ENCODE measurements at regions of chr13 and their contacts with region 1.

Region 1: GRCh38 chr13:25286969-25287961 is at the start of gene MTMR6:
- DNase-seq: peak; percentile 92 to 96
- H3K4me3 ChIP-seq: peak within 1 kb of the TSS; percentile 76
- H3K4me3 Mint-ChIP-seq: peak within 1 kb of the TSS; percentile 97
- H3K27ac Mint-ChIP-seq: peak within 1 kb of the TSS; percentile 93
- H3K4me1 ChIP-seq: no peaks in the 10 kb centered on the region
- H3K4me1 Mint-ChIP-seq: no peaks in the 10 kb centered on the region
- H3K27me3 ChIP-seq: no peaks in the 10 kb centered on the region
- H3K27me3 Mint-ChIP-seq: peaks cover 23% of the 10 kb centered on the region
- CTCF ChIP-seq: peak; percentile 99
- total RNA-seq, gene MTMR6: 12.7 and 13.0 TPM in 2 replicates

Region 2: DNA sequence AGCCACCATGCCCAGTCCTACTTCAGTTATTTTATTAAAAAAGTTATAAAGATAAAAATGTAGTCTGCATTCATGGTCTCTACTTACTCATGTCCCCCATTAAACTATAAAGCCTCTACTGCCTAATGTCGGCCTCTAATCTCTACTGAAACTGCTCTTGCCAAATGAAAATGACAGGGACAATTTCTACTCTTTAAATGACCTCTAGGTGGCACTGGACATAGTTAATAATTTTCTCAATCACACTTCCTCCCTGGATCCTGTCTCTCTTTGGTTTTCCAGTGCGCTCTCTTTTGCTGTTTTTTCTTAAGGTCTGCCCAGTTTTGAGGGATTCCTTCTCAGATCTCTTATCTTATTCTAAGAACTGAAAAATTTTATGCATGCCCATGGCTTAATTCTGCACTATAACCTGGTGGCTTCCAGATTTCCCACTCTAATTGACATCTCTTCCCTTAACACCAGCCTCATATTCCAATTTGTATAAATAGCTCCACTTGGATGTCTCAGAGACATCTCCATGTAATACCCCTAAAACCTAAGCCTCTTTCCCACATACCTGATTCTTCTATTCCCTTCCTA is 54.2 kb before region 1 on chr13:
- CTCF ChIA-PET with region 1: no interaction called
- POLR2A ChIA-PET with region 1: no interaction called
- intact Hi-C with region 1: loop called (anchors 2 kb)
- DNase-seq: peak in 1 of 2 experiments; percentile 46
- H3K4me3 ChIP-seq: no peak overlapping the region
- H3K4me3 Mint-ChIP-seq: no peak overlapping the region
- H3K27ac Mint-ChIP-seq: peak overlapping the region; percentile 24
- H3K4me1 ChIP-seq: peaks cover 6% of the 10 kb centered on the region; the same call in 1 of the 2 replicates
- H3K4me1 Mint-ChIP-seq: peaks cover 25% of the 10 kb centered on the region
- H3K27me3 ChIP-seq: peaks cover 1% of the 10 kb centered on the region; the same call in 1 of the 2 replicates
- H3K27me3 Mint-ChIP-seq: peaks cover 5% of the 10 kb centered on the region
- CTCF ChIP-seq: peak in 1 of 2 experiments; percentile 55

Measured in Caco-2 (cell line).